ENCODE measurements at regions of chr2 and their contacts with region 1.

Region 1: DNA sequence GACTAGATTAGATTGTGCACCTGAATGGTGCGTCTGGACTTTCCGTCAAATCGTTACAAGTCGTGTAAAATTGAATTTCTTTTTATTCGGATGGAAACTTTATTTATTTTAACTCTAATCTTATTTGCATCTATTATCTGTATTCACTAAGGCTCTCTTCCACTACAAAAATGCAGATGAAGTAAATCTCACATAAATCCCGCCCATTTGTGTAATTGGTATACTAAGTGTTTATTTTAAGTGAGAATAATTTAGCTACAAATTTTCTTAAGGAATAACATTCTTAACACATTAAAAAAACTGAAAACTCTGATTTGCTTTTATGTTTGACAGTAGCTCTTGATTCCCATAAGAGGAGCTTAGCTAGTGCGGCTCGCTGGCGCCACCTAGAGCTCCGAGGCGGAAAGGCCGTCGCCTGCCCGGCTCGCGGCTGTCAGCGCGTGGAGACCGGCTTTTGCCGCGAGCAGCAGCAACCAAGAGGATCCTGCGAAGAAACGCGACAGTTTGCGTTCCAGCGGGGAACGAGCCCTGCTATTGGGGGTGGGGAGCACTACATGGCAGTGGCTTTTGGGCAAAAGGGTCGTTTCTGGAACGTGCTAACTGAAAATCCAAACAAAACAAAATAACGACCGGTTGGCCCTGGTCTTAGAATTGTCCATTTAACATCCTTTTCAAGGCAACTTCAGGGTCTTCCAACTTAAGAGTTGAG is 6.7 kb downstream of the SP9 start:
- DNase-seq: peak; percentile 81 to 94 (median 82)
- ATAC-seq: peak; percentile 84 to 94 (median 90)
- H3K4me3 ChIP-seq: peak overlapping the region in 1 of 12 donors; percentile 28
- H3K27ac ChIP-seq: no peak overlapping the region
- H3K4me1 ChIP-seq: peaks cover 7 to 61% (median 33%) of the 10 kb centered on the region in 12 donors
- H3K27me3 ChIP-seq: peaks cover 69 to 95% (median 87%) of the 10 kb centered on the region in 9 donors
- CTCF ChIP-seq: peak; percentile 94 to 100 (median 98)
- POLR2A ChIP-seq: no peak

Region 2: DNA sequence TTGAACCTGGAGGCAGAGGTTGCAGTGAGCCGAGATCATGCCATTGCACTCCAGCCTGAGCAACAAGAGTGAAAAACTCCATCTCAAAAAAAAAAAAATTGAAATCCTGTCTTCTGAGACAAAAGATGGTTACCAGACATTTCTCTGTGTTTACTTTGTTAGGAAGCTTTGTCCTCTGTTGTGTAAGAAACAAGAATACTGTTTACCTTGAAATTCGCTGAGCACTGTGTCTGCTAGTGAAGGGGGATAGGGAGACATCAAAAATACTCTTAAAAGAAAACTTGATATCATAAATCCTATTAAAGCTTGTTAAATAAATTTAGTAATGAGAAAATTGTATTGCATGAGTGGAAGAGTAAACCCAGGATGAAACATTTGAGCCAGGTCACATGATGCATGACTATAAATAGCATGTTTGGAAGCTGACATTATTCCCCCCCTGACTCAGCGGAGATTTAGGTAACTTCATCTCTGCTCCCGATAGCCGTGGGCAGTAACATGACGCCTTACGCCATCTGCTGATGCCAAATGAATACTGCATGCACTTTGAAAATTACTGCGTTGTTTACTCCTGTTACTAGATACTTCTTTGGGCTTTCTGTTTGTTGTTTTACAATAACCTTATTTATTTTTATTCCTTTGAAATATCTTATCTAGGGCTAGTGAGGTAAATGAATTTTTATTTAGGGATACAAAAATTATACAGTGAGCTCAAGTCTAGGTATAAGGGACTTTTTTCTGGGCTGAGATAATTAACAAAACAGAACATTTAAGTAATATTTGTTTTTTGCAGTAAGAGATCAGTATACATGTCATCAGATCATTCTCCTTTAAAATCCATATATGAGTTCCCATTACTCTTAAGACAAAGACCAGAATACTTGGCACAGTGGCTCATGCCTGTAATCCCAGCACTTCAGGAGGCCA is 1130.9 kb before region 1 on chr2:
- intact Hi-C with region 1: loop called in 1 of 10 experiments (anchors 10 kb)
- DNase-seq: peak in 4 of 5 donors; percentile 68 to 83 (median 74)
- ATAC-seq: peak; percentile 86 to 92 (median 91)
- H3K4me3 ChIP-seq: no peak overlapping the region
- H3K27ac ChIP-seq: peak overlapping the region in 11 of 12 donors; percentile 8 to 85 (median 69)
- H3K4me1 ChIP-seq: peaks cover 0 to 61% (median 22%) of the 10 kb centered on the region in 12 donors
- H3K27me3 ChIP-seq: no peaks in the 10 kb centered on the region
- CTCF ChIP-seq: peak; percentile 77 to 96 (median 92)
- POLR2A ChIP-seq: no peak

Region 3: DNA sequence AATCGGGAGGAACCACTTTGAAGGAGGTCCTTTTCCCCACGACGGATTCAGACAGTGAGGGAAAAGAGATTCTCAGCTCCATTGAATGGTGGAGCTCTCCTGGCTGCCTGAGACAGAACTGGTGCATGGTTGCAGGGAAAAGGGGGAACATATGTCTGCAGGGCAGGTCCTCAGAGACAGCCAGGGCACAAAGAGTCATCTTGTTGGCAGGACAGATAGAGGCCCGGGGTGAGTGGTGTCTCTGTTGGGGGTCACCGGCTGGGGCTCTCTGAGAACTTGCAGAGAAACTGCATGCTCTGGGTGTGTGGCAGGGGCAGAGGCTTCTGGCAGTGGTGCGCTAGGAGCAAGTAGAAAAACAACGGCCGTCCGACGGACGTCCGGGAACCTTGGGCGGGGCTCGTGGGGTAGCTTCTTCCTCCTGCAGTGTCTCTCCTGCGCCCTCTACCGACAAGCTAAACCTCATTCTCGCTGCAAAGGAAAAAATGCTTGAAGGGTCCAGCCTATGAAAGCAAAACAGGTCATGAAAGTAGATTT is 892.4 kb before region 1 on chr2:
- intact Hi-C with region 1: loop called in 1 of 10 experiments (anchors 5 kb)
- DNase-seq: peak; percentile 83 to 90 (median 88)
- ATAC-seq: peak; percentile 68 to 96 (median 94)
- H3K4me3 ChIP-seq: peak overlapping the region in 10 of 12 donors; percentile 22 to 53 (median 40)
- H3K27ac ChIP-seq: peak overlapping the region in 11 of 12 donors; percentile 33 to 80 (median 62)
- H3K4me1 ChIP-seq: peaks cover 0 to 9% (median 0%) of the 10 kb centered on the region in 12 donors
- H3K27me3 ChIP-seq: no peaks in the 10 kb centered on the region
- CTCF ChIP-seq: peak; percentile 66 to 88 (median 74)
- POLR2A ChIP-seq: no peak

Region 4: DNA sequence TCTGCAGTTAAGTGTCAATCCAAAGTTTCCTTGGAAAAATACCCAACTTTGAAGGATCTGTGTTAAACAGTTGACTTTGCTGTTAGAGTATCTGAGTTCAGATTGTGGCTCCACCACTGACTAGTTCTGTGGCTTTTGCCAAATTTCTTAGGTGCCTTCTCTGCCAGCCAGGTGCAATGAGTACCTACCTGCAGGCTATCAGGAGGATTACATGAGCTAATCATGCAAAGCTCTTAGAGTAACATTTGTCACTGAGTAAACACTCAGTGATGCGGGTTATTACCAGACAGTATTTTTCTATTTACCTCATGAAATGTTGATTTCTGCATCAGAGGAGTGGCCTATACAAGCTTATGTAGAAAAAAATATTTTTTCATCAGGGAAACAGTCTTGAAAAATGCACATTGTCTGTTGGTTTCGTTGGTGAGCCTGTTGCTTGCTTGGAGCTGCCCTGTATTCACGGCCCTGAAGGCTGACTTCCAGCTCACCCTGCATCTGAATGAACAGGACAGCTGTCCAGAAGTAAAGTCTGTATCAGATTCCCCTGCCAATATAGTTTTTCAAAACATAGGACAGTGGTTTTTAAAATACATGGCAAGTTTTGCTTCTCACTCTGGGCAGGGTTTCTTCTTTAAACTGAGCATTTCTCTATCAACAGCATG is 751.7 kb before region 1 on chr2:
- intact Hi-C with region 1: loop called in 1 of 10 experiments (anchors 10 kb)
- DNase-seq: no peak
- ATAC-seq: peak; percentile 37 to 57 (median 43)
- H3K4me3 ChIP-seq: peak overlapping the region in 1 of 12 donors; percentile 25
- H3K27ac ChIP-seq: peak overlapping the region in 9 of 12 donors; percentile 31 to 68 (median 51)
- H3K4me1 ChIP-seq: peaks cover 0 to 15% (median 4%) of the 10 kb centered on the region in 12 donors
- H3K27me3 ChIP-seq: no peaks in the 10 kb centered on the region
- CTCF ChIP-seq: no peak
- POLR2A ChIP-seq: no peak

Region 5: DNA sequence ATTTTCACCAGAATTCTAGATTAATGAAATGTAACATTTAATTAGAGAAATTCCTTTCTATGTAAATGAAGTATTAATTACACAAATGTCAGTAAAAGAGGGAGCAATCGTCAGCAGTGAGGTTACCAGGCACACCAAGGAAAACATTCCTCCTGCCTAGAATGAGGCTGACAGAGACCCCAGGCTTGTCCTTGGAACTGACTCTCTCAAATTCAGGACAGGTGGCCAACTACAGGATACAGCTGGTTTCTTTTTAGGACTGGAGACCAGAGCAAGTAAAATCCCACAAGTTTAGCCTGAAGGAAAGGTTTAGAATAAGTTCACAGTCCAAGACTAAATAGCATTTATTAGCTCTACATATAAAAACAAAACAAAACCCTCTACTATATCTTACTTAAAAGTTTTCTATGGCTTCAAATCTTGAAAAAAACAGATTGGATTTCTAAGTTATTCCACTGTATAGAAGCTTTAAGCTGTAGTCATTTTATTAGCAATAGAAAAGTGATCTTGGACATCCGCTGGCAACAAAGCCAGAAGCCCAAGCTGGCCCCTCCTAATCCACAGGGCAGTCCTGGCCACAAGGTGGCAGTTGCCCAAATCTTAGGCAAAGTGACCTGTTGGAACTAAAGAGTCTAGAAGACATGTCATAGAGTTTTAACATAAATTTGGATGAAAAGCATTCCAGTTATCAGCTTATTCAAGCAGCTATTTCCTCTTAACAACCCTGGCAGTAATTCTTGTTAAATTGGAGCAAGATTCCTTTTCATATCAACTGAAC is 457.2 kb before region 1 on chr2:
- intact Hi-C with region 1: loop called in 3 of 10 experiments (anchors 5 kb)
- DNase-seq: peak; percentile 43 to 69 (median 62)
- ATAC-seq: peak in 3 of 4 donors; percentile 52 to 71 (median 69)
- H3K4me3 ChIP-seq: no peak overlapping the region
- H3K27ac ChIP-seq: no peak overlapping the region
- H3K4me1 ChIP-seq: peaks cover 0 to 11% (median 0%) of the 10 kb centered on the region in 12 donors
- H3K27me3 ChIP-seq: no peaks in the 10 kb centered on the region
- CTCF ChIP-seq: peak; percentile 53 to 79 (median 67)
- POLR2A ChIP-seq: no peak

Region 6: DNA sequence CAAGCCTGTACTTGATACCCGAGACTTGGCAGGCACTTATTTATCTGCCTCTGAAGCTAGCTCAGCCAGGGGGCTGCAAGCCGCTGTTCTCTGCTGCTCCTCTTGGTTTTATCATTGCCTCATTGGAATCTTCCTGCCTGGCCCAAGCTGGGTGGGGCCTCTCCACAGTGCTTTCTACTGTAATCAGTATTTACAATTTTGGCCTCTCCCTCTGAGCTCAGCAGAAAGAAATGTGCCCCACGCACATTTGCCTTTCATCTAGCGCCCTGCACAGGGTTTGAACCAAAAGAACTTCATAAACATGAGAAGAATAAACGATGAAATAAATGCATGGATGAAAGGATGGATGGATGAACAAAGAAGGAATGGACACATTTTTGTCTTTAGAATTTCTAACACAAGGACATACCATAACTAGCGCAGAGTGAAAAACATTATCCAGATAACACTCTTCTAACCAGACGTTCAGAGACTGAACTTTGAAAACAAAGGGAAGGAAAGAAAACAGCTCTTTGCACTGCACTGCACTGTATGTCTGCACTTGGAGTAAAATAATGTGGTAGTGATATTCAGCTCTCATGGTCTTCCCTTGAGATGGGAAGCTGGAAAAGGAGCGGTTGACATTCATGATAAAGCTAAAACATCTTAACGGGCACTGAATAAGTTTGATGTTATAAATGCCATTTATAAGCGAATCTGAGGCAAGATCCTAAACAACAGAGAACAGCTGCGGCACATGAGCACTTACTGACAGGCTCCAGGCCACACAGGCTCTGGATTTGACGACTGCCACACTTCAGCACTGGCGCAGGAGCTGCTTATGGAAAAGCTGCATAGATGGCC is 289.5 kb before region 1 on chr2:
- intact Hi-C with region 1: loop called in 1 of 10 experiments (anchors 10 kb)
- DNase-seq: peak in 2 of 5 donors; percentile 31 to 45
- ATAC-seq: peak; percentile 65 to 89 (median 82)
- H3K4me3 ChIP-seq: peak overlapping the region in 1 of 12 donors; percentile 24
- H3K27ac ChIP-seq: peak overlapping the region in 6 of 12 donors; percentile 18 to 49 (median 40)
- H3K4me1 ChIP-seq: peaks cover 0 to 30% (median 16%) of the 10 kb centered on the region in 12 donors
- H3K27me3 ChIP-seq: no peaks in the 10 kb centered on the region
- CTCF ChIP-seq: no peak
- POLR2A ChIP-seq: no peak

Region 7: GRCh38 chr2:174094542-174094941 is 246.9 kb before region 1 on chr2:
- intact Hi-C with region 1: no loop called
- DNase-seq: no peak
- ATAC-seq: no peak
- H3K4me3 ChIP-seq: no peak overlapping the region
- H3K27ac ChIP-seq: no peak overlapping the region
- H3K4me1 ChIP-seq: no peaks in the 10 kb centered on the region
- H3K27me3 ChIP-seq: no peaks in the 10 kb centered on the region
- CTCF ChIP-seq: no peak
- POLR2A ChIP-seq: no peak

Region 8: DNA sequence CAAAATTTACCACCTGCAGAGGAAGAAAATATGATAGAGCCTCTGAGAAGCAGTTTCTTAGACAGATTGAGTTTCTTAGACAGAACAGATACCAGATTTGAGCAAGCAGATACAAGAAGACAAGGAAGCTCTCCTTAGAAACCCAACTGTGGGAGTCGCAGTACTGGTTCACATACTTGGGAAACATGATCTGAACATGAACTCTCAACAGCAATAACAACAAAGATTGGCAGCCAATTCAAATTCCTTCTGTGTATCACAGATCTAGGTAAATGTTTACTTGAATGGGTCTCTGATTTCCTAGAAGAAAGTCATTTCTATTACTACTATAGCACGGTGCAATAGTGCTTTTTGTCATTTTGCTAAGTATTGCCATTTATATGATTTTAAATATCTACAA is 175.2 kb before region 1 on chr2:
- intact Hi-C with region 1: loop called in 1 of 10 experiments (anchors 10 kb)
- DNase-seq: no peak
- ATAC-seq: no peak
- H3K4me3 ChIP-seq: no peak overlapping the region
- H3K27ac ChIP-seq: no peak overlapping the region
- H3K4me1 ChIP-seq: no peaks in the 10 kb centered on the region
- H3K27me3 ChIP-seq: no peaks in the 10 kb centered on the region
- CTCF ChIP-seq: no peak
- POLR2A ChIP-seq: no peak

Measured in heart left ventricle (tissue), 16 donors.